ENCODE measurements at regions of chr3 and their contacts with region 1.

Region 1: DNA sequence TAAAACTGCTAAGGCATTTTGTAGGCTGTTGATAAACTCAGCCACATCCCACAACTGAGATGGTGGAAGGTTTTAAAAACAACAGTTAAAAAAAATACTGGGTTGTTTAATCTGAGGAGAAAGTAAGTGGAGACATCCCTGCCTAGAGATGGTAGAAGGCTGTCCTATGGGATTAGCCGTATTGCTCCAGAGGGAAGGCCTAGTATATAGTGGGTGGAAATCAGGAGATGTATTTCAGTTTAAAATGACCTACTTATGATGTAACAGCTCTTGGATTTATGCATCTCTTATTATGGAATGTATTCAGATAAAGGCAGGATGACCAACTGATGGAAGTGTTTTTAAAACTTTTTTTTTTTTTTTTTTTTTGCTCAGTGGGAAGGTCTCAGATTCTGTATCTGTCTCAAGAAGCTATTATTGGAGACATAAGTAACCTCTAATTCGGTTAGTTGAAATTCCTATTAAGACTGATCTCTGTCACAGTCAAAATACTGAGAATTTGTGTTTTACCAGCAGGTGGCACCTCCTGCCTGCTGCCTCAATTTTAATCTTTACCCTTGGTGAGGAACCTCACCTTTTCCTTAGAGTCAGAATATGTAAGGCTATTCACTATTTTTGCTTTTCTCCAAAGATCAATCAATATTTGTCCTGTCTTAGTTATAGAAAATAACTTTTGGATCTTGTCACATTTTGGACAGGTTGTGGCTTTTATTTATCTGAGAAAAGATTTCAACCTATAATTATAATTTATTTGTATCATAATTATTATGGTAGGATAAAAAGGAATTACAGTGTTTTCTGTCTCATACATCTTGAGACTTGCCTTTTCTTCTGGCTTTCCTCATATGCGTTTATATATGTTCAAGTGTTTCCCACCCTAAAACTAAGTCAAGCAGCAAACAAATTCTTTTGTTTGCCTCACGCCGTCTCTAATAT is 63.0 kb downstream of the VPS8 start:
- DNase-seq: peak; percentile 63
- ATAC-seq: peak; percentile 69
- H3K4me3 ChIP-seq: no peak overlapping the region
- H3K27ac ChIP-seq: no peak overlapping the region
- H3K4me1 ChIP-seq: no peaks in the 10 kb centered on the region
- H3K27me3 ChIP-seq: no peaks in the 10 kb centered on the region
- CTCF ChIP-seq: peak; percentile 85

Region 2: GRCh38 chr3:185030399-185030798 is 155.4 kb after region 1 on chr3:
- CTCF ChIA-PET with region 1: interaction called, 14 read pairs
- POLR2A ChIA-PET with region 1: no interaction called
- intact Hi-C with region 1: no loop called
- DNase-seq: no peak
- ATAC-seq: no peak
- H3K4me3 ChIP-seq: no peak overlapping the region
- H3K27ac ChIP-seq: no peak overlapping the region
- H3K4me1 ChIP-seq: no peaks in the 10 kb centered on the region
- H3K27me3 ChIP-seq: no peaks in the 10 kb centered on the region
- CTCF ChIP-seq: no peak

Region 3: DNA sequence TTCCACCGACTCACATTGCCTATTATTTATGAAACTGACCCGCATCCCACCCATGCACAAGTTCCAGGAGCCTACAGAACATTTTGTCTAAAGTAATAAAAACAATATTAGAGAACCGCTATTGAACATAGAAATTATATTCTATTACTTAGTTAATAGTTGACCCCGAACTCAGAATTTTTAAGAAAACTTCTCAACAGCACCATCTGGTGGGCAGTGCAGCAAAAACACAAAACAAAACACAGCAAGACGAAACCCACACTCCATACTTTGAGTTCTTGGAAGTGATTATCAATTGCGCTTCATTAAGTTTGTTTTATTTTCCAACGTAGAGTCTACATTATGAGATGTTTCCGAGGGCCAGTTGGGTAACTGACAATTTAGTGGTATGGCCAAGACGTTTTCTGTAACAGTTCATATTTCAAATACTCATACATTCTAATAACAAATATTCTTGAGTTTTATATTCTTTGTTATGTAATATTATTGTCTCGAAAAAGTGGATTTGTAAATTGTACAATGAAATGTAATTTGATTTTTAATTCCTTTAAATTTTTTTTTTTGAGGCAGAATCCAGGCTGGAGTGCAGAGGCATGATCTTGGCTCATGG is 301.9 kb after region 1 on chr3:
- CTCF ChIA-PET with region 1: no interaction called
- POLR2A ChIA-PET with region 1: no interaction called
- intact Hi-C with region 1: loop called (anchors 1 kb)
- DNase-seq: peak; percentile 70
- ATAC-seq: peak; percentile 31; the same call in 1 of the 2 replicates
- H3K4me3 ChIP-seq: no peak overlapping the region
- H3K27ac ChIP-seq: no peak overlapping the region
- H3K4me1 ChIP-seq: no peaks in the 10 kb centered on the region
- H3K27me3 ChIP-seq: peaks cover 37% of the 10 kb centered on the region
- CTCF ChIP-seq: peak; percentile 84

Region 4: DNA sequence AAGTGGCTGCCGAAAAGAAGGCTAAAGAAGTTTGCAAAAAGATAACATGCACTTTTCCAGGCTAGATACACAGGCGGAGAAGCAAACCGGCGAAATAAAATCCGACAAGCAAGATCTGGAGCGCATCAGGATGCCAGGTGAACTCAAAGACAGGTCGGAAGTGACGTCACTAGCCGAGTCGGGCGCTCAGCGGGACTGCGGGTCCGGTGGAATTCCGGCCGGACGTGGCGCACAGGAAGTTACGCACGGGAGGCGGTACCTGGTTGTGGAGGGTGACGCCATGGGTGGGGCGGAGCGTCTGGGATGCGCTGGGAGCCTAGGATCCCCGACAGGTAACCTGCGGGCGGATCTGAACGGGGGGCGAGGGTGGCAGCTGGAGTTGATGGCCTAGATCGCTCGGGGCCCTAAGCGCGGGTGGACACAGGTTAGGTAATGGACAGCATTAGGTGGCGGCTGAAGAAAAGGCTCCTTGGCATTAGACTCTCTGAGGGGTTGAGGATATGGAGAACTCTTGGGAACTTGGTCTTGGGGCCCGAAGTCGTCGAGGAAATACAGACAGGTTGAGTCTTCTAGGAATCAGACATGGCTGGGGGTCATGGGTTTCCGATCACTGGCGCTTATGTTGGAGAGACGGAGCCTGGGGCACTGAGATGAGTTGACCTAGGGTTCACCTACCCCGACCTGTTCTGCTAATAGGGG is 407.9 kb after region 1 on chr3:
- CTCF ChIA-PET with region 1: no interaction called
- POLR2A ChIA-PET with region 1: no interaction called
- intact Hi-C with region 1: loop called (anchors 1 kb)
- DNase-seq: peak; percentile 98
- ATAC-seq: peak; percentile 99
- H3K4me3 ChIP-seq: peak overlapping the region; percentile 84
- H3K27ac ChIP-seq: peak overlapping the region; percentile 32
- H3K4me1 ChIP-seq: peaks cover 24% of the 10 kb centered on the region
- H3K27me3 ChIP-seq: no peaks in the 10 kb centered on the region
- CTCF ChIP-seq: no peak

Measured in PC-3 (cell line).